ENCODE measurements at regions of chr3 and their contacts with region 1.

Region 1: DNA sequence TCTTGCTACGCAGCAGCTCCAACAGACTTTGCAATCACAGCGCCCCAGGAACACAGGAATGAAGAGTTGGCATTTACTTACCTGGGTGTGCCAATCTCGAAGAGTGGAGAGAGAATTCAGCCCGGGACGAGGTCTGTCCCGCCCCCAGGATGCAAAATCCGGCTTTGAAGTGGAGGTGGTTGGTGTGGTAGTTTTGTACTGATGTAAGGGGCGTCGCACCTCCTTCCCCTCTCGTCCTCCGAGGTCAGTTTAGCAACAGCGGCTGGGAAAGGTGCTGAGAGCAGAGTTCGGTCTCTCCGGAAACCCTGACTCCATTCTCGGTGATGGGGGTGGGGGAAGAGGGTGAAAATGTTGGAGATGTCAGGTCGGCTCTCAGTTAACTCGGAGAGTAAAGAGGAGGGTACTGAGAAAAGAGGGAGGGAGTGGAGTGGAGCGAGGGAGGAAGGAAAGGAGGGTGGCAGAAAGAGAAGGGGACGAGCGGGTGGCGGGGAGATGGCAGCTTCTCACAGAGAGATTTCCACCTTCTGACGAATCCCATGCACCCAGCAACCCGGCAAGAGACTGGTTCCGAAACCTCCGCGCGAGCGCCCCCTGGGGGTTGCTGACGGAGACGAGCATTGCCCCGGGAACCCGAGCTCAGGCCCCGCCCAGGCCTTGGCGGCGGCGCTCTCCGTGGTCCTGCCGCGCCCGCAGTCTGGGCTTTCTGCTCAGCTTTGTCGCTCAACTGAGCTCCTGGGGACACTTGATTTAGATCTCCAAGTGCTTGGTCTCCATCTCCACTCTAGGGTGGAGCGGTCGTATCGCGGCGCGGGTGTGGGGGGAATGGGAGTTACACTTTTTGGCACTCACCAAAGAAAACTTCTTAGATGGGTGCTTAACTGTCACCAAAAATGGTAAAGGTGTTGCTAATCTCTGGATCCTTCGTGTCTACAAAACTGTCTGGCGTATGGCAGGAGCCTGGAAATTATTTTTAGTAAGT is at the start of gene CPNE4:
- DNase-seq: peak; percentile 80
- ATAC-seq: peak; percentile 95
- total RNA-seq, gene CPNE4: 1.2 to 7.6 TPM

Region 2: DNA sequence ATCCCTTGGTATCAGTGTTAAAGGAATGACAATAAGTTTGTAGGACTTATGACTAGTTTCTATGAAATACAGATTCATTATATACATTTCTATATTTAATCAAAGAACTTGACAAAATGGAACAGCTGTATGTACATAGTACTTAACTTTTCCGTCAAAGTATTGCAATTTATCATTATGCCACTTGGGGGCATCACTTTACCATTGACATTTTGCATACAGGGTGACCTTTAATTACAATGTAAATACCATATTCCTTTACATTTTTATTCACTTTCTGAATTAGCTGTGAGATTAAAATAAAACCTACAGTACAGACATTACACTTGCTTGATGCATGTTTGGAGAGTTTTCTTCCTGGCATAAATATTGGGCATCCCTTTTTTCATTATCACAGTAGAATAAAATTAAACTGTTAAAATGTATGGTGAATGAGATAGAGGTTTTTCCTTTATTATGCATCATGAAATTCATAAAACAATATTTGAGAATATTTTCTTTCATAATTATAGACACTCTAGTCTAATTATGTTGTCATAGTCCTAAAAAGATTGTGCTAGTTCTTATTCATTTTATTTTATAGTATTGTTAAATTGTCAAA is 1001.2 kb before region 1 on chr3:
- intact Hi-C with region 1: loop called in 1 of 2 experiments (anchors 10 kb)
- DNase-seq: no peak
- ATAC-seq: no peak

Region 3: GRCh38 chr3:132180337-132180791 is 145.6 kb after region 1 on chr3:
- intact Hi-C with region 1: loop called (anchors 5 kb)
- DNase-seq: no peak
- ATAC-seq: no peak

Measured in left cardiac atrium (tissue), 4 donors.